GM10248 (cell line): ENCODE measurements at regions of chr1 and their contacts with region 1.

Region 1: GRCh38 chr1:58155418-58156123 is 391.0 kb downstream of the OMA1 start:
- DNase-seq: no peak
- CTCF ChIP-seq: peak; percentile 15

Region 2: DNA sequence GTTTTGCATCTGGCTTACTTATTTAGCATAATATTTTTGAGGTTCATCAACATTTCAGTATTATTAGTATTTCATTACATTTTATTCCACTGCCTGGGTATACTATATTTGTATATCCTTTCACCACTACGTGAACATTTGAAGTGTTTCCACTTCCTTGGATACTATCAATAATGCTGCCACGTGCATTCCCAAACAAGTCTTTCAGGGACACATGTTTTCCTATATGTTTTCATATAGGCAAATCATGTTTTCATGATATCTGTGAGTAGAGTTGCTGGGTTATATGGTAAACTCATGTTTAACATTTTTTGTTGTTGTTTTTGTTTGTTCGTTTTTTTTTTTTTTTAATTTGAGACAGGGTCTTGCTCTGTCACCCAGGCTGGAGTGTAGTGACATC is 10.8 kb after region 1 on chr1:
- CTCF ChIA-PET with region 1: interaction called, 13 read pairs
- POLR2A ChIA-PET with region 1: no interaction called
- DNase-seq: no peak
- CTCF ChIP-seq: no peak

Region 3: DNA sequence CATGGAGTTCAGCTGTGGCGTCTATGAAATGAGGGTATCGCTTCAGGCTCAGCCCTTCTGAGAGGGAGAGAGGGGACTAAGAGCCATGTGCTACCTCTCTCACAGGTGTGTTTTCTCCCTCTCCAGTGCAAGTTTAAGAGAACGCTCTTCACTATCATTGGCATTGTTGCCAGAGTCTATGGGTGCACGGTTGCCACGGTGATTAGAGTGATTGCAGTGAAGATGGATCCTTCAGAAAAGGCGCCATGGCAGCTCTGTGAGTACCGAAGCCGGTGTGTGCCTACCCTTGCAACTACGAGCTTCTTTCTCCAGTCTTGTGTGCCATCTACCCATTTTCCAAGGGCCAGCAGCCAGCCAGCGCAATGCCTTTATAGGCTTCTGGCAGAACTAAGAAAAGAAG is 100.5 kb after region 1 on chr1:
- CTCF ChIA-PET with region 1: no interaction called
- POLR2A ChIA-PET with region 1: no interaction called
- DNase-seq: no peak
- CTCF ChIP-seq: no peak

Region 4: DNA sequence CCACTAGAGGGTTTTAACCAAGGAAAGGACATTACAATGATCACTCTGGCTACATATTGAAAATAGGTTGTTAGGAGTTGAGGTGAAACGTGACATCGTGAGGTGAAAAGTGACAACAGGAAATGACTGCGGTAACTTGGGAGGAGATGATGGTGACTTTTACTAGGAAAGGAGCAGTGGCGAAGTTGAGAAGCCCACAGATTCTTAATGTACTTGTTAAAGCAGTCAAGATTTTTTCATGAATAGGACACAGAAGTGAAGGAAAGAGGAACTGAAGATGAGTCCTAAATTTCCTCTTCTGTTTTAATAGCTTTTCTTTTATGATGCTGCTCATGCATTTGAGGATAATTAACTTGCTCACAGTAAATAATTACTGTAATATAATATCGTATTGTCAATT is 331.4 kb after region 1 on chr1:
- CTCF ChIA-PET with region 1: no interaction called
- POLR2A ChIA-PET with region 1: no interaction called
- DNase-seq: no peak
- CTCF ChIP-seq: no peak